ENCODE measurements at regions of chrX and their contacts with region 1.

Region 1: DNA sequence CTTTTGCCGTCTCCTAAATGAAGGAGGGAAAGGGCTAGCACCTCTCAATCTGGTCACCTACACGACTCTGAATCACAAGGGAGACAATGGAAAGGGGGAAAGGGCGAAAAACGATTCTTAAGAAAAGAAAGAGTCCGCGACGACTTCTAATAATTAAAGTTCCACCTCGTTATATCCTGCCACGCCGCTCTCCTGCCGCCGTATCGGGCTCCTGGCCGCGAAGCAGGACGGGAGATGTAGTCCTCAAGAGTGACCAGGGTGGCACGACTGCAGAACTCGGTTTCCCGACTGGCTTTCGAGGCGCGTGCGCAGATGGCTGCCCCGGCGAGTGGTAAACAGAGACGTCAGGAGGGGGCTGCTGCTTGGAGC is at the start of gene FOXO4:
- DNase-seq: peak; percentile 81 to 94 (median 86)
- H3K4me3 ChIP-seq: peak within 1 kb of the TSS; percentile 90
- H3K4me3 Mint-ChIP-seq: peak within 1 kb of the TSS; percentile 86 to 100 (median 96)
- H3K27ac ChIP-seq: peak within 1 kb of the TSS; percentile 57
- H3K27ac Mint-ChIP-seq: peak within 1 kb of the TSS; percentile 57 to 99 (median 96)
- H3K4me1 ChIP-seq: peaks cover 20% of the 10 kb centered on the region
- H3K4me1 Mint-ChIP-seq: peaks cover 41 to 49% (median 43%) of the 10 kb centered on the region in 3 donors
- H3K27me3 ChIP-seq: no peaks in the 10 kb centered on the region
- H3K27me3 Mint-ChIP-seq: peaks cover 0 to 8% of the 10 kb centered on the region in 2 donors
- total RNA-seq, gene FOXO4: 12.8 to 13.8 TPM

Region 2: GRCh38 chrX:70466968-70467367 is 628.6 kb before region 1 on chrX:
- CTCF ChIA-PET with region 1: no interaction called
- POLR2A ChIA-PET with region 1: no interaction called
- DNase-seq: no peak
- H3K4me3 ChIP-seq: no peak overlapping the region
- H3K4me3 Mint-ChIP-seq: no peak overlapping the region
- H3K27ac ChIP-seq: no peak overlapping the region
- H3K27ac Mint-ChIP-seq: no peak overlapping the region
- H3K4me1 ChIP-seq: peaks cover 6% of the 10 kb centered on the region
- H3K4me1 Mint-ChIP-seq: peaks cover 14 to 38% (median 16%) of the 10 kb centered on the region in 3 donors
- H3K27me3 ChIP-seq: no peaks in the 10 kb centered on the region
- H3K27me3 Mint-ChIP-seq: peaks cover 0 to 2% of the 10 kb centered on the region in 2 donors

Region 3: DNA sequence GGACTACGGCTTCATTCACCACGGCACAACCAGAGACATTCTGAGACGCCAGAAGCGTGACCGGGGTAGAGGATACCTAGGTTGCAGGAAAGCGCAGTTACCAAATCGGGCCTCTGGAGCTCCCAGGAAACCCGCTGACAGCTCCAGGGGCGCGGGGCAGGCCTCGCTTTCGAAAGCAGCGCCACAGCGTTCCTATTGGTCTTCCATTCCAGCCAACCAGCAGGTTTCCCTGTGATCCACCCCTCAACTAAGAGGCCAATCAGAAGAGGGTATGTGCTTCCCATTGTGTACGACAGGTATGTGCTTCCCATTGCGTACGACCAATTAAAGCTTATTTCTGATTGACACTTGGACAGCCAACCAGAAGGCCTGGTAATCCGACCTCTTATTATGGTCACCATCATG is 42.3 kb before region 1 on chrX:
- CTCF ChIA-PET with region 1: no interaction called
- POLR2A ChIA-PET with region 1: no interaction called
- DNase-seq: no peak
- H3K4me3 ChIP-seq: no peak overlapping the region
- H3K4me3 Mint-ChIP-seq: no peak overlapping the region
- H3K27ac ChIP-seq: no peak overlapping the region
- H3K27ac Mint-ChIP-seq: no peak overlapping the region
- H3K4me1 ChIP-seq: no peaks in the 10 kb centered on the region
- H3K4me1 Mint-ChIP-seq: peaks cover 14 to 22% (median 14%) of the 10 kb centered on the region in 3 donors
- H3K27me3 ChIP-seq: no peaks in the 10 kb centered on the region
- H3K27me3 Mint-ChIP-seq: peaks cover 0 to 3% of the 10 kb centered on the region in 2 donors

Region 4: DNA sequence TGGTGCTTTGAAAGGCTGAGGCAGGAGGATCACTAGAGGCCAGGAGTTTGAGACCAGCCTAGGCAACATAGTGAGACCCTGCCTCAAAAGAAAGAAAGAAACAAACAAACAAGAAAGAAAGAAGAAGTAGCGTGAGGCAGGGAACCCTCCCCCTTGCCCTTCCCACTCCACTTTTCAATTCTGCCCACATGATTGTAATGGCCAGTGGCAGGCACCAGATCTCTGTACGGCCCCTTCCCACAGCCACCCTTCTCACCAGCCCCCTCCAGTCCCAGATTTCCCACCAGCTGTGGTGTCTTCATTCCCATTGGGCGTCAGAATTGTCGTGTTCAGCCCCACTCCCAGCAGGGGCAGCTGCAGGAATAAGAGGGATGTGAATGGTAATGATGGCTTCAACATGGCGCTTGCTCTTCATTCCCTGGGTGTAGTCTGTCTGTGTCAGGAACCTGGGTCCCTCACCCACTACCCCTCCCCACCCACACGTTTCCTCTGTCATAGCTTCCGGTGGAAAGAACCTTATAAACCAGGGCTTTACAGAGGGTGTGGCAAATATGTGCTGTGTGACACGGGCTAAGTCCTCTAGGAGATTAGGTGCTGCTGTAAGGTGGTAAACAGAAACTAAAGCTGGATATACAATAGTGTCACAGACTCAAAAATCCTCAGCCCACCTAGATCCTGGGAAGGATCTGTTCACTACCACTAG is 15.8 kb after region 1 on chrX and contains the start of gene IL2RG:
- CTCF ChIA-PET with region 1: interaction called, 41 read pairs
- POLR2A ChIA-PET with region 1: interaction called, 11 read pairs
- DNase-seq: peak; percentile 60 to 90 (median 88)
- H3K4me3 ChIP-seq: peak within 1 kb of the TSS; percentile 99
- H3K4me3 Mint-ChIP-seq: peak within 1 kb of the TSS; percentile 89 to 98 (median 96)
- H3K27ac ChIP-seq: peak within 1 kb of the TSS; percentile 98
- H3K27ac Mint-ChIP-seq: peak within 1 kb of the TSS; percentile 97 to 100 (median 98)
- H3K4me1 ChIP-seq: peaks cover 44% of the 10 kb centered on the region
- H3K4me1 Mint-ChIP-seq: peaks cover 51 to 73% (median 67%) of the 10 kb centered on the region in 3 donors
- H3K27me3 ChIP-seq: no peaks in the 10 kb centered on the region
- H3K27me3 Mint-ChIP-seq: peaks cover 0 to 7% of the 10 kb centered on the region in 2 donors
- total RNA-seq, gene IL2RG: 312 to 323 TPM

Region 5: GRCh38 chrX:71118032-71118984 is 22.8 kb after region 1 on chrX and contains the start of gene MED12:
- CTCF ChIA-PET with region 1: interaction called, 41 read pairs
- POLR2A ChIA-PET with region 1: interaction called, 13 read pairs
- DNase-seq: peak; percentile 74 to 86 (median 78)
- H3K4me3 ChIP-seq: peak within 1 kb of the TSS; percentile 73
- H3K4me3 Mint-ChIP-seq: peak within 1 kb of the TSS; percentile 87 to 95 (median 88)
- H3K27ac ChIP-seq: peak within 1 kb of the TSS; percentile 61
- H3K27ac Mint-ChIP-seq: peak within 1 kb of the TSS; percentile 91 to 98 (median 94)
- H3K4me1 ChIP-seq: peaks cover 23% of the 10 kb centered on the region
- H3K4me1 Mint-ChIP-seq: peaks cover 21 to 50% (median 34%) of the 10 kb centered on the region in 3 donors
- H3K27me3 ChIP-seq: no peaks in the 10 kb centered on the region
- H3K27me3 Mint-ChIP-seq: peaks cover 0 to 2% of the 10 kb centered on the region in 2 donors
- total RNA-seq, gene MED12: 49.3 to 61.1 TPM